ENCODE measurements at regions of chr1 and their contacts with region 1.

Region 1: DNA sequence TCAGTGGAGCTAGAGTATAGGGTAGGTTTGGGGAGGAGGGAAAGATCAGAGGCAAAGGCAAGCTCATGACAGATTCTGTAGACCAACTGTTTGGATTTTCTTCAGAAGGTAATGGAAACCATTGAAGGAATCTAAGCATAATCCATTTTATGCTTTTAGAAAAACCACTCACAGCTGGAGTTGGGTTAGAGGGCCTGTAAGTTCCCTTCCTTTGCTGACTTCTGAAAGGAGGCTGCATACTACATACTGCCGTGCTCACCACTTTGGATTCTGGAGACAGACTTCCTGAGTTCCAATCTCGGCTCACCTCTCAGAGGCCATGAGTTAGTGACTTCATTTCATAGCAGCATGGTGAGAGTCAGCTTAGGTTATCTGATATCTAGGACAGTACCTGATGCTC is 6.4 kb upstream of the SYT2 start:
- DNase-seq: no peak
- H3K4me3 ChIP-seq: no peak overlapping the region
- H3K27ac ChIP-seq: no peak overlapping the region
- H3K4me1 ChIP-seq: no peaks in the 10 kb centered on the region
- H3K27me3 ChIP-seq: peaks cover 3% of the 10 kb centered on the region
- CTCF ChIP-seq: no peak

Region 2: GRCh38 chr1:202184750-202185460 is 531.7 kb before region 1 on chr1:
- CTCF ChIA-PET with region 1: no interaction called
- dilution Hi-C with region 1: no loop called
- in situ Hi-C with region 1: loop called (anchors 10 to 25 kb)
- intact Hi-C with region 1: loop called (anchors 1 kb)
- DNase-seq: peak; percentile 74
- H3K4me3 ChIP-seq: no peak overlapping the region
- H3K27ac ChIP-seq: no peak overlapping the region
- H3K4me1 ChIP-seq: peaks cover 5% of the 10 kb centered on the region
- H3K27me3 ChIP-seq: no peaks in the 10 kb centered on the region
- CTCF ChIP-seq: peak; percentile 86 to 93

Region 3: DNA sequence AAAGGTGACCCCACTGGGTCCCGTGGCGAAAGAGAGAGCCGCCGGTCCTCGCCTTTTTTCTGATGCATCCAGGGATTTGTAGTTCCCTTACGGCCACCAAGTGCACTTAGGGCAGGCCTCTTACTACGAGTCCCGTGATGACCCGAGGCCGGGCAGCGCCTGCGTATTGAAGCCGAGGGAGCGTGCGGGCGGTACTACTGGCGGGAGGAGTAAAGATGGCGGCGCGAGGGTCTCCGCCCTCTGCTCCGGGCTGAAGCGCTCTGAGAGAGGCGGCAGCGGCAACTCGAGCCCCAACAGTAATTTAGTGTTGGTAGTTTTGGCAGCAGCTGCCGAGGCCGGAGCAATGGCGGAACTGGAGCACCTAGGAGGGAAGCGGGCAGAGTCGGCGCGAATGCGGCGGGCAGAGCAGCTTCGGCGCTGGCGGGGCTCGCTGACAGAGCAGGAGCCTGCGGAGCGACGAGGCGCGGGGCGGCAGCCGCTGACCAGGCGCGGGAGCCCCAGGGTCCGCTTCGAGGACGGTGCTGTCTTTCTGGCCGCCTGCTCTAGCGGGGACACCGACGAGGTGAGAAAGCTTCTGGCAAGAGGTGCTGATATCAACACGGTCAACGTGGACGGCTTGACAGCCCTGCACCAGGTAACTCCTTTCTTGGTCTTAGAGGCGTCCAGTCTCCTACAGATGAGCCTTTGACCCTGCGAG is 368.0 kb before region 1 on chr1 and contains the start of gene PPP1R12B:
- CTCF ChIA-PET with region 1: no interaction called
- dilution Hi-C with region 1: no loop called
- in situ Hi-C with region 1: loop called in 1 of 2 experiments (anchors 25 kb)
- intact Hi-C with region 1: loop called (anchors 1 kb)
- DNase-seq: peak; percentile 98
- H3K4me3 ChIP-seq: peak within 1 kb of the TSS; percentile 95 to 97 (median 97)
- H3K27ac ChIP-seq: peak within 1 kb of the TSS; percentile 84
- H3K4me1 ChIP-seq: peaks cover 8% of the 10 kb centered on the region
- H3K27me3 ChIP-seq: no peaks in the 10 kb centered on the region
- CTCF ChIP-seq: no peak
- total RNA-seq, gene PPP1R12B: 13.5 to 42.0 TPM

Region 4: GRCh38 chr1:202501281-202501680 is 215.4 kb before region 1 on chr1:
- CTCF ChIA-PET with region 1: interaction called, 14 read pairs
- dilution Hi-C with region 1: no loop called
- in situ Hi-C with region 1: no loop called
- intact Hi-C with region 1: loop called (anchors 1 kb)
- DNase-seq: peak; percentile 25
- H3K4me3 ChIP-seq: no peak overlapping the region
- H3K27ac ChIP-seq: no peak overlapping the region
- H3K4me1 ChIP-seq: peaks cover 8% of the 10 kb centered on the region
- H3K27me3 ChIP-seq: no peaks in the 10 kb centered on the region
- CTCF ChIP-seq: peak; percentile 29 to 49

Region 5: DNA sequence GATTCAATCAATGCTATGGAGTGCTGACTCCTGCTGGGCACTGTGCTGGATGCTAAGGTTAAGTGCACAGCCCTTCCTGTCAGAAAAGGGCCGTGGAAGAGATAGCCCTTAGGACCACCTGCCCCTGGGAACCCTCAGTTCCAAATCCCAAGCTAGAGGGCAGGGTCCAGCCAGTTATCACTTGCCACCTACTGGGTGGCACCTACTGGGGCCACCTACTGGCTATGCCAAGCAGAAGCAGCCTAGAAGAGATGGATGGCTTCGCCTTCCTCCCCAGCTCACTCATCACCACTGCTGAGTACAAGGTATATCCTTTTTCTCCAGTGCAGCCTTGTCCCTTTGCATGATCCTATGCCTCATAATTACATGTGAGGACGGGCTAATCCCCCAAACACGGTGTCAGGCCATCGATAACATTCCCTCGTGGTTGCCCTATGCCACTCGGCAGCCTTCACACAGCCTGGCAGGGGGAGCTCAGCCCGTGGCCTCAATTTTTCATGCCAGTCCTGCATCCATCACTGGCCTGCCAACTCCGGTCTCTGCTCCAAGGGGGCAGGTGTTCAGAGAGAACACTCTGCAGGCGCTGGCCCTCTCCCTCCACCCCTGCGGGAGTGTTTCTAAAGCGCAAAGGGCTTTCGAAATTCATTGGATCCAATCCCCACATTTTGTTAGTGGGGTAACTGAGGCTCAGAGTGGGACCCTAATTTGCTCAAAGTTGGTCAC is 55.4 kb before region 1 on chr1:
- CTCF ChIA-PET with region 1: no interaction called
- dilution Hi-C with region 1: no loop called
- in situ Hi-C with region 1: no loop called
- intact Hi-C with region 1: no loop called
- DNase-seq: no peak
- H3K4me3 ChIP-seq: no peak overlapping the region
- H3K27ac ChIP-seq: no peak overlapping the region
- H3K4me1 ChIP-seq: no peaks in the 10 kb centered on the region
- H3K27me3 ChIP-seq: peaks cover 2% of the 10 kb centered on the region
- CTCF ChIP-seq: peak; percentile 33 to 56

Region 6: DNA sequence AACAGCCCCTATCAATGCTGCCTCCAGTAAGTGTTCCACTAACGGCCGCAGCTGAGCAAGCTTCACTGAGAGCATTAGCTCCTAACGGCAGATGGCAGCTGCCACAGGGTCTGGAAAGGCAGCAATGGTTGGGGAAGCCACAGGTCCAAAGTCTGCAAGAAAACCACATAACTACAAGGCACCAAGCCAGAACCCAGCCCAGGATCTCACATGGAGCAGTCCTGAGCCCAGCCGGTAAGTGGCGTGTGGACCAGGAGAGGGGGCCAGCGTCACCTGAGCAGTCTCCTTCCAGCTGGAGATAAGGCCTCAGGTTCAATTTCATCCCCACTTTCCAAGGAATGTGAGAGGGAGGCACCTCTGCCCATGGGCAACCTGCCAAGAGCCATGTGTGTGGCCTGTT is 19.6 kb before region 1 on chr1:
- CTCF ChIA-PET with region 1: interaction called, 12 read pairs
- dilution Hi-C with region 1: no loop called
- in situ Hi-C with region 1: no loop called
- intact Hi-C with region 1: no loop called
- DNase-seq: no peak
- H3K4me3 ChIP-seq: no peak overlapping the region
- H3K27ac ChIP-seq: no peak overlapping the region
- H3K4me1 ChIP-seq: no peaks in the 10 kb centered on the region
- H3K27me3 ChIP-seq: peaks cover under 1% of the 10 kb centered on the region
- CTCF ChIP-seq: no peak